ENCODE measurements at regions of chr2 and their contacts with region 1.

Region 1: DNA sequence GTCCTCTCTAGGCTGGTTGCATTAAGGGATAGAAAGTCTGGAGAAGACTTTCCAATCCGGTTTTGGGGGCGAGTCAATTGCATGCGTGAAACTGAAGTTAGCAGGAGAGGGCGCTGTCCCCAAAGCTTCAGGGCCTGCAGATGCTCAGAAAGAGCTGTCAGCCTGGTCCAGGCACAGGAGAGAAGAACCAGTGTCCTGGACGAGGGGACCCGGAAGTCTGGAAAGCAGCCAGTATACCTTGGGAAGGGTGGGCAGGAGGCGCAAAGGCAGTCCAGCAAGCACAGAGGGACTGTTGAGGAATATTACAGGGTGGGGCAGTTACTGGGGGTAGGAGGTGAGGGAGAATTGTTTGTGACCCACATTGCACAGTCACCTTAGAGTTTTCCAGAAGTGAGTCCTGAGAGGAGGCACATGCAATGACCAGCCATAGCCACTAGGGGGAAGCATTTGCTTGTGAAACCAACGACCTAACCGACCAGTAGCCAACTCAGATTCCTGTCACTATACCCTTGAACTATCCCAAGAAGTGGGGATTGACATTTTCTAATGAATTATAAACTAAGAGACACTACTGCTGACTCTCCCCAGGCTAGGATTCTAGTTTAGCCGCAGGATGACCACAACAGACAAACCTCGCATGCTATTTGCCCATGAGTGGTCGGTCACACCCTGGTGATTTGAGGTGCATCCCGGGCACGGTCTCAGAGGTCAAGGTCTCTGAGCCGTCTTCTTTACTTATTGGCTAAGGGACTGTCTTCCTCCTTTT is 172.8 kb downstream of the RDH14 start:
- DNase-seq: peak; percentile 79 to 85
- ATAC-seq: peak; percentile 92
- H3K4me3 ChIP-seq: no peak overlapping the region
- H3K27ac ChIP-seq: peak overlapping the region in 1 of 2 donors; percentile 13
- H3K4me1 ChIP-seq: no peaks in the 10 kb centered on the region
- H3K27me3 ChIP-seq: no peaks in the 10 kb centered on the region

Region 2: GRCh38 chr2:17104454-17104853 is 1283.2 kb before region 1 on chr2:
- intact Hi-C with region 1: no loop called
- DNase-seq: no peak
- ATAC-seq: no peak
- H3K4me3 ChIP-seq: no peak overlapping the region
- H3K27ac ChIP-seq: no peak overlapping the region
- H3K4me1 ChIP-seq: no peaks in the 10 kb centered on the region
- H3K27me3 ChIP-seq: no peaks in the 10 kb centered on the region

Region 3: GRCh38 chr2:18422432-18423165 is 35.0 kb after region 1 on chr2:
- intact Hi-C with region 1: loop called in 1 of 2 experiments (anchors 5 kb)
- DNase-seq: no peak
- ATAC-seq: no peak
- H3K4me3 ChIP-seq: no peak overlapping the region
- H3K27ac ChIP-seq: no peak overlapping the region
- H3K4me1 ChIP-seq: peaks cover 0 to 2% of the 10 kb centered on the region in 2 donors
- H3K27me3 ChIP-seq: no peaks in the 10 kb centered on the region

Region 4: DNA sequence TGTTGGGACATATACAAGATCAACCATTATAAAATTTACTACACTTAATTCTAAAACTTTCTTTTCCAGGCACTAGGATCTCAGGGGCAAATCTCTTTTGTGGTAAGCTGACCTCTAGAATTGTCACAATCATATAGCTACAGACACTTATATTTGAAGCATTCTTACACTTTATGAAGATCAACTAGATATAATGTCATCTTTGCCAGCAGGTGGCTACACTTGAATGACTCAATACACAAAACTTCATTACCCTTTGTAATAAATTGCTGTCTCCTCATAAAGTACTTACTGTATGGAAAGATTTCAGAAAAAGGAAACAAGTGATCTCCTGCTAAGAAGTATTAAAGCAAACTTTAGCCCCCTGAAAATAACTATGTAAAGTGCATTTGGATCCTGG is 95.0 kb after region 1 on chr2:
- intact Hi-C with region 1: no loop called
- DNase-seq: no peak
- ATAC-seq: no peak
- H3K4me3 ChIP-seq: no peak overlapping the region
- H3K27ac ChIP-seq: no peak overlapping the region
- H3K4me1 ChIP-seq: no peaks in the 10 kb centered on the region
- H3K27me3 ChIP-seq: no peaks in the 10 kb centered on the region

Region 5: GRCh38 chr2:18741895-18742732 is 354.5 kb after region 1 on chr2:
- intact Hi-C with region 1: loop called in 1 of 2 experiments (anchors 5 kb)
- DNase-seq: peak; percentile 65 to 78
- ATAC-seq: peak; percentile 64
- H3K4me3 ChIP-seq: no peak overlapping the region
- H3K27ac ChIP-seq: no peak overlapping the region
- H3K4me1 ChIP-seq: no peaks in the 10 kb centered on the region
- H3K27me3 ChIP-seq: no peaks in the 10 kb centered on the region